ENCODE measurements at regions of chr4 and their contacts with region 1.

Region 1: GRCh38 chr4:69823481-69824186 is 36.3 kb downstream of the SULT1E1 start:
- DNase-seq: peak; percentile 10 to 45
- H3K4me3 ChIP-seq: no peak overlapping the region
- H3K4me1 ChIP-seq: no peaks in the 10 kb centered on the region
- H3K27me3 ChIP-seq: no peaks in the 10 kb centered on the region

Region 2: DNA sequence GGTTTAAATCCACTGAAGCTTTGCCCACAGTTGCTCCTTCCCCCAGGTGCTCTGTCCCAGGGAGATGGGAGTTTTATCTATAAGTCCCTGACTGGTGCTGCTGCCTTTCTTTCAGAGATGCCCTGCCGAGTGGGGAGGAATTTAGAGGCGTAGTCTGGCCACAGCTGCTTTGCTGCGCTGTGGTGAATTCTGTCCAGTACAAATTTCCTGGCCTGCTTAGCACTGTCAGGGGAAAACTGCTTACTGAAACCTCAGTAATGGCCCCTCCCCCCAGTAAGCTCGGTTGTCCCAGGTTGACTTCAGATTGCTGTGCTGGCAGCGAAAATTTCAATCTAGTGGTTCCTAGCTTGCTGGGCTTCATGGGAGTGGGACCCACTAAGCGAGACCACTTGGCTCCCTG is 1287.7 kb before region 1 on chr4:
- in situ Hi-C with region 1: no loop called
- DNase-seq: no peak
- H3K4me3 ChIP-seq: no peak overlapping the region
- H3K4me1 ChIP-seq: no peaks in the 10 kb centered on the region
- H3K27me3 ChIP-seq: no peaks in the 10 kb centered on the region

Region 3: DNA sequence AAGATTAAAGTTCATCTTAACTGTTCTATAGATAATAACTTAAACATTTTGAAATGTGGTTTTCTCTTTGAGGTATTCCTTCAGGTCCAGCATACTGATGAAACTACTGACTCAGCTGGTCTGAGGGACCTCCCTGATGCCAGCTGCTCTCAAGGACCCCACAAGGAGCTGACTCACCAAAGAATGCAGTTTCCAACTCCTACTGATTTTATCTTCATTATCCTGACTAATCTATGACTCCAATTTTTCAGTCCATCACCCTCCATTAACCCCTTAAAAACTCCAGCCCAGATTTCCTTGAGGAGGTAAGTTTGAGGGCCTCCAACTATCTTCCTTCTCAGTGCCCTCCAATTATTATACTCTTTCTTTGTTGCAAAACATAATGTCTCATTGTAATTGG is 326.6 kb before region 1 on chr4:
- in situ Hi-C with region 1: no loop called
- DNase-seq: no peak
- H3K4me3 ChIP-seq: no peak overlapping the region
- H3K4me1 ChIP-seq: no peaks in the 10 kb centered on the region
- H3K27me3 ChIP-seq: no peaks in the 10 kb centered on the region

Region 4: DNA sequence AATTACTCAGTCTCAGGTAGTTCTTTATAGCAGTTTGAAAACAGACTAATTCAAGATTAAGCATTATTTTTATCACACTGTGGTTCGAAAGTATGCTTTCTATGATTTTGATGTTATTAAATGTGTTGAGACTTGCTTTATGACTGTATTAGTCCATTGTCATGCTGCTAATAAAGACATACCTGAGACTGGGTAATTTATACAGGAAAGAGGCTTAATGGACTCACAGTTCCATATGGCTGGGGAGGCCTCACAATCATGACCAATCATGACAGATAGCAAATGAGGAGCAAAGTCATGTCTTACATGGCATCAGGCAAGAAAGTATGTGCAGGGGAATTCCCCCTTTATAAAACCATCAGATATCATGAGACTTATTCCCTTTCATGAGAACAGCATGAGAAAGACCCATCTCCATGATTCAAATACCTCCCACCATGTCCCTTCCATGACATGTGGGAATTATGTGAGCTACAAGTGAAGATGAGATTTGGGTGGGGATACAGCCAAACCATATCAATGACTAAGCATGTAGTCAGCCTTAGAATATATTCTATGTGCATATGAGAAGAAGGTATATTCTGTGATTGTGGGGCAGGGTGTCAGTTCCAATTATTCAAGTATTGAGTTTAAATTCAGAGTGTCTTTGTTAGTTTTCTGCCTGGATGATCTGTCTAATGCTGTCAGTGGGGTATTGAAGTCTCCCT is 125.9 kb before region 1 on chr4:
- in situ Hi-C with region 1: loop called (anchors 10 kb)
- DNase-seq: no peak
- H3K4me3 ChIP-seq: no peak overlapping the region
- H3K4me1 ChIP-seq: no peaks in the 10 kb centered on the region
- H3K27me3 ChIP-seq: no peaks in the 10 kb centered on the region